B cell (primary cell): ENCODE measurements at regions of chr9 and their contacts with region 1.

Region 1: GRCh38 chr9:130693426-130694191 is at the start of gene EXOSC2:
- DNase-seq: peak; percentile 97
- ATAC-seq: peak; percentile 100
- H3K4me3 ChIP-seq: peak within 1 kb of the TSS; percentile 70 to 97 (median 74)
- H3K4me3 Mint-ChIP-seq: peak within 1 kb of the TSS; percentile 98
- H3K27ac ChIP-seq: peak within 1 kb of the TSS; percentile 8 to 68
- H3K27ac Mint-ChIP-seq: peak within 1 kb of the TSS; percentile 95
- H3K4me1 ChIP-seq: peaks cover 18 to 19% of the 10 kb centered on the region in 2 donors
- H3K4me1 Mint-ChIP-seq: peaks cover 40% of the 10 kb centered on the region
- H3K27me3 ChIP-seq: no peaks in the 10 kb centered on the region
- H3K27me3 Mint-ChIP-seq: no peaks in the 10 kb centered on the region
- CTCF ChIP-seq: no peak
- total RNA-seq, gene EXOSC2: 53.3 and 55.5 TPM in 2 replicates

Region 2: GRCh38 chr9:130587921-130588320 is 105.7 kb before region 1 on chr9:
- CTCF ChIA-PET with region 1: no interaction called
- POLR2A ChIA-PET with region 1: interaction called, 10 read pairs
- intact Hi-C with region 1: no loop called
- DNase-seq: no peak
- ATAC-seq: no peak
- H3K4me3 ChIP-seq: no peak overlapping the region
- H3K4me3 Mint-ChIP-seq: no peak overlapping the region
- H3K27ac ChIP-seq: no peak overlapping the region
- H3K27ac Mint-ChIP-seq: no peak overlapping the region
- H3K4me1 ChIP-seq: no peaks in the 10 kb centered on the region
- H3K4me1 Mint-ChIP-seq: peaks cover 17% of the 10 kb centered on the region
- H3K27me3 ChIP-seq: no peaks in the 10 kb centered on the region
- H3K27me3 Mint-ChIP-seq: no peaks in the 10 kb centered on the region
- CTCF ChIP-seq: no peak

Region 3: DNA sequence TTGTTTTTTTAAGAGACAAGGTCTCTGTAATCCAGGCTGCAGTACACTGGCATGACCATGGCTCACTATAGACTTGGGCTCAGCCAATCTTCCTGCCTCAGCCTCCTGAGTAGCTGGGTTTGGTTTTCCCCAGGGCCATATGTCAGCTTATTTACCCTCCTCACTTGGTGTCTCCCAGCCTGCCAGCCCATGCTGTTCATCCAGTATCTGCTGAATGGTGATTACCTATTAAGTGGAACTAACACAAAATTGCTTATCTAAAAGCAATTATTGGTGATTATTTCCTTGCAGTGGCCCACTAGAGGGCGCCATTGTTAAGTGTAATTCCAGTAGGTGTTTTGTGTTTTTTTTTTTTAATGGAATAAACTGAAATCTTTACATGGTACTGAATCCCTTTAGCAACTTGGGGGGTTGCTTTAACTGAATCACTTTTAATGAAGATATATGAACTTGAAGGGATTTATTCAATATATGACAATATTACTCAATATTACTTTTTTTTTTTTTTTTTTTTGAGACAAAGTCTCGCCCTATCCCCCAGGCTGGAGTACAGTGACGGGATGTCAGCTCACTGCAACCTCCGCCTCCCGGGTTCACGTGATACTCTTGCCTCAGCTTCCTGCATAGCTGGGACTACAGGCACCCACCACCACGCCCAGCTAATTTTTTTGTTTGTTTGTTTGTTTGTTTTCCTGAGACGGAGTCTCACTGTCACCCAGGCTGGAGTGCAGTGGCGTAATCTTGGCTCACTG is 13.8 kb after region 1 on chr9:
- CTCF ChIA-PET with region 1: interaction called, 17 read pairs
- POLR2A ChIA-PET with region 1: interaction called, 6 read pairs
- intact Hi-C with region 1: loop called (anchors 1 kb)
- DNase-seq: peak; percentile 79
- ATAC-seq: no peak
- H3K4me3 ChIP-seq: no peak overlapping the region
- H3K4me3 Mint-ChIP-seq: no peak overlapping the region
- H3K27ac ChIP-seq: no peak overlapping the region
- H3K27ac Mint-ChIP-seq: no peak overlapping the region
- H3K4me1 ChIP-seq: peaks cover 0 to 5% of the 10 kb centered on the region in 2 donors
- H3K4me1 Mint-ChIP-seq: peaks cover 1% of the 10 kb centered on the region
- H3K27me3 ChIP-seq: no peaks in the 10 kb centered on the region
- H3K27me3 Mint-ChIP-seq: no peaks in the 10 kb centered on the region
- CTCF ChIP-seq: peak; percentile 85

Region 4: GRCh38 chr9:130712564-130713285 is 19.1 kb after region 1 on chr9:
- CTCF ChIA-PET with region 1: interaction called, 17 read pairs
- POLR2A ChIA-PET with region 1: interaction called, 6 read pairs
- intact Hi-C with region 1: loop called (anchors 1 kb)
- DNase-seq: peak; percentile 97
- ATAC-seq: peak; percentile 97
- H3K4me3 ChIP-seq: peak overlapping the region; percentile 53 to 94 (median 88)
- H3K4me3 Mint-ChIP-seq: peak overlapping the region; percentile 92
- H3K27ac ChIP-seq: peak overlapping the region; percentile 92 to 98
- H3K27ac Mint-ChIP-seq: peak overlapping the region; percentile 95
- H3K4me1 ChIP-seq: peaks cover 24 to 33% of the 10 kb centered on the region in 2 donors
- H3K4me1 Mint-ChIP-seq: peaks cover 33% of the 10 kb centered on the region
- H3K27me3 ChIP-seq: no peaks in the 10 kb centered on the region
- H3K27me3 Mint-ChIP-seq: no peaks in the 10 kb centered on the region
- CTCF ChIP-seq: no peak

Region 5: GRCh38 chr9:130901498-130902203 is 208.0 kb after region 1 on chr9:
- CTCF ChIA-PET with region 1: no interaction called
- POLR2A ChIA-PET with region 1: no interaction called
- intact Hi-C with region 1: no loop called
- DNase-seq: no peak
- ATAC-seq: no peak
- H3K4me3 ChIP-seq: no peak overlapping the region
- H3K4me3 Mint-ChIP-seq: no peak overlapping the region
- H3K27ac ChIP-seq: no peak overlapping the region
- H3K27ac Mint-ChIP-seq: no peak overlapping the region
- H3K4me1 ChIP-seq: no peaks in the 10 kb centered on the region
- H3K4me1 Mint-ChIP-seq: no peaks in the 10 kb centered on the region
- H3K27me3 ChIP-seq: peaks cover 0 to 8% (median 0%) of the 10 kb centered on the region in 4 experiments
- H3K27me3 Mint-ChIP-seq: no peaks in the 10 kb centered on the region
- CTCF ChIP-seq: no peak